Activated CD4-positive, alpha-beta T cell treated with anti-CD3 and anti-CD28 coated beads, Interleukin-2, amount 10 ng/mL, durations not matched to agents 24 days and 14 days (primary cell): ENCODE measurements at regions of chr19 and their contacts with region 1.

Region 1: GRCh38 chr19:54102421-54103169 is at the start of gene NDUFA3:
- DNase-seq: peak; percentile 99
- H3K4me3 Mint-ChIP-seq: peak within 1 kb of the TSS; percentile 99
- H3K27ac Mint-ChIP-seq: peak within 1 kb of the TSS; percentile 97
- H3K4me1 Mint-ChIP-seq: peaks cover 22% of the 10 kb centered on the region
- H3K27me3 Mint-ChIP-seq: no peaks in the 10 kb centered on the region
- total RNA-seq, gene NDUFA3: 105 and 131 TPM in 2 replicates

Region 2: GRCh38 chr19:54115109-54116063 is 12.8 kb after region 1 on chr19 and contains the starts of genes PRPF31 and TFPT:
- intact Hi-C with region 1: loop called (anchors 1 kb)
- DNase-seq: peak; percentile 99
- H3K4me3 Mint-ChIP-seq: peak within 1 kb of the TSS; percentile 89
- H3K27ac Mint-ChIP-seq: peak within 1 kb of the TSS; percentile 87
- H3K4me1 Mint-ChIP-seq: peaks cover 24% of the 10 kb centered on the region
- H3K27me3 Mint-ChIP-seq: peaks cover 2% of the 10 kb centered on the region
- total RNA-seq, gene PRPF31: 110 and 115 TPM in 2 replicates
- total RNA-seq, gene TFPT: 31.0 and 33.7 TPM in 2 replicates